ENCODE measurements at regions of chr21 and their contacts with region 1.

Region 1: GRCh38 chr21:32569261-32570230 is 15.8 kb downstream of the TCP10L start:
- DNase-seq: peak; percentile 86
- H3K4me3 ChIP-seq: peak overlapping the region; percentile 66 to 73
- H3K27ac ChIP-seq: peak overlapping the region; percentile 77 to 91
- H3K4me1 ChIP-seq: peaks cover 0 to 6% of the 10 kb centered on the region in 2 experiments; a peak in 3 of 4 replicates
- H3K27me3 ChIP-seq: no peaks in the 10 kb centered on the region
- CTCF ChIP-seq: peak; percentile 88
- EP300 ChIP-seq: no peak; a peak in 1 of 4 replicates
- RAD21 ChIP-seq: peak; percentile 67

Region 2: DNA sequence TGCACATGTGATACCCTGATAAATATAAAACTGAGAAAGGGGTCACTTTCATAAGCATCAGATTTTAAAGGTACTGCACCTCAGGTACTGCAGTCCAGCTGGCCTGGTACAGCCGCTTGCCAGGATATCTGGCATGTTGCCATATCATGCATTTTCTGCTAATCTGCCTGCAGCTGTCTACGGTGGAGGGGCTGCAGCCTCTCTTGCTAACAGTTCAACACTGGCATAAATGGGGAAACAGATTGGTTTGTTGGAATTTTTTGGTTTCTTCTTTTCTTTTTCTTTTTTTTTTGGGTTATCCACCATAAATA is 362.2 kb before region 1 on chr21:
- CTCF ChIA-PET with region 1: no interaction called
- POLR2A ChIA-PET with region 1: no interaction called
- DNase-seq: peak; percentile 76
- H3K4me3 ChIP-seq: no peak overlapping the region
- H3K27ac ChIP-seq: peak overlapping the region in 1 of 2 experiments; percentile 92; a peak in 2 of 4 replicates
- H3K4me1 ChIP-seq: peaks cover 0 to 25% of the 10 kb centered on the region in 2 experiments; a peak in 2 of 4 replicates
- H3K27me3 ChIP-seq: no peaks in the 10 kb centered on the region
- CTCF ChIP-seq: no peak
- EP300 ChIP-seq: peak in 1 of 2 experiments; percentile 71; a peak in 2 of 4 replicates
- RAD21 ChIP-seq: peak; percentile 24; the same call in 1 of the 2 replicates

Region 3: GRCh38 chr21:32403201-32403777 is 166.3 kb before region 1 on chr21:
- CTCF ChIA-PET with region 1: interaction called, 67 read pairs
- POLR2A ChIA-PET with region 1: no interaction called
- DNase-seq: peak; percentile 81
- H3K4me3 ChIP-seq: no peak overlapping the region
- H3K27ac ChIP-seq: no peak overlapping the region
- H3K4me1 ChIP-seq: no peaks in the 10 kb centered on the region; a peak in 1 of 4 replicates
- H3K27me3 ChIP-seq: no peaks in the 10 kb centered on the region
- CTCF ChIP-seq: peak; percentile 79
- EP300 ChIP-seq: no peak
- RAD21 ChIP-seq: peak; percentile 82

Region 4: GRCh38 chr21:32412162-32413014 is 157.2 kb before region 1 on chr21 and contains the start of gene EVA1C:
- CTCF ChIA-PET with region 1: interaction called, 14 read pairs
- POLR2A ChIA-PET with region 1: no interaction called
- DNase-seq: peak; percentile 82
- H3K4me3 ChIP-seq: peak within 1 kb of the TSS; percentile 63 to 72
- H3K27ac ChIP-seq: peak within 1 kb of the TSS in 1 of 2 experiments; percentile 81; a peak in 2 of 4 replicates
- H3K4me1 ChIP-seq: peaks cover 13% of the 10 kb centered on the region in 2 experiments; a peak in 3 of 4 replicates
- H3K27me3 ChIP-seq: no peaks in the 10 kb centered on the region
- CTCF ChIP-seq: no peak; the same call in 1 of the 2 replicates
- EP300 ChIP-seq: no peak
- RAD21 ChIP-seq: no peak
- polyA plus RNA-seq, gene EVA1C: 9.5 and 10.1 TPM in 2 replicates

Region 5: DNA sequence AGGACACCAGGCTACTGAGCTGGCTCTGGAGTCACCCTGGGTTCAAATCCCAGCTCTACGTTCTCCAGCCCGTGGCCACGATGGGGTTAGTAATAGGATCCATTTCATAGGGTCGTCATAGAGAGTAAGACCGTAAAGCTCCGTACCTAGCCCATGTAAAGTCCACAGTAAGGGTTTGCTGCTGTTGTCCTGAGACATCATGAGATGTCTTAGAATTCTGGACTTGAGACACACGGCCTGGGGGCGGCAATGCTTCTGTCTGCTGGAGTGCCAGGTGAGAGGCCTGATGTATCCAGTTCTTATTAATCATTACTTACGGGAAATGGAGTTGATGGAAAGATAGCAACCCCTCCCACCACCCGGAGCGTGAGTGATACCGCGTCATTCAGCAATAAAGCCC is 12.2 kb after region 1 on chr21:
- CTCF ChIA-PET with region 1: interaction called, 14 read pairs
- POLR2A ChIA-PET with region 1: no interaction called
- DNase-seq: no peak
- H3K4me3 ChIP-seq: no peak overlapping the region
- H3K27ac ChIP-seq: no peak overlapping the region
- H3K4me1 ChIP-seq: no peaks in the 10 kb centered on the region
- H3K27me3 ChIP-seq: no peaks in the 10 kb centered on the region
- CTCF ChIP-seq: no peak
- EP300 ChIP-seq: no peak
- RAD21 ChIP-seq: no peak

Region 6: DNA sequence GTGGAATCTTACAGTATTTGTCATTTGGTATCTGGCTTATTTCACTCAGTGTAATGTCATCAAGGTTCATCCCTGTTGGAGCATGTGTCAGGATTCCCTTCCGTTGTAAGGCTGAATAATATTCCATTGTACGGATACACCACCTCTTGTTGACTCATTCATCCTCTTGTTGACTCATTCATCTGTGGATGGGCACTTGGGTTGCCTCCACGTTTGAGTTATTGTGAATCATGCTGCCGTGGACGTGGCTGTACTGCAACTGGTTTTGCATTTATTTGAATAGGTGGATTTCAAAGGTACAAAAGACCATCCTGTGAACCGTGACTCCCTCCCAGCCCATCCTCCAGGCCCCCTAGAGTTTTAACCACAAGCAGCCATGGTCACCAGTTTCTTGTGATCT is 27.7 kb after region 1 on chr21:
- CTCF ChIA-PET with region 1: interaction called, 39 read pairs
- POLR2A ChIA-PET with region 1: no interaction called
- DNase-seq: no peak
- H3K4me3 ChIP-seq: no peak overlapping the region
- H3K27ac ChIP-seq: peak overlapping the region in 1 of 2 experiments; percentile 97; a peak in 2 of 4 replicates
- H3K4me1 ChIP-seq: peaks cover 0 to 3% of the 10 kb centered on the region in 2 experiments; a peak in 1 of 4 replicates
- H3K27me3 ChIP-seq: no peaks in the 10 kb centered on the region
- CTCF ChIP-seq: no peak
- EP300 ChIP-seq: peak in 1 of 2 experiments; percentile 94; a peak in 2 of 4 replicates
- RAD21 ChIP-seq: no peak

Region 7: DNA sequence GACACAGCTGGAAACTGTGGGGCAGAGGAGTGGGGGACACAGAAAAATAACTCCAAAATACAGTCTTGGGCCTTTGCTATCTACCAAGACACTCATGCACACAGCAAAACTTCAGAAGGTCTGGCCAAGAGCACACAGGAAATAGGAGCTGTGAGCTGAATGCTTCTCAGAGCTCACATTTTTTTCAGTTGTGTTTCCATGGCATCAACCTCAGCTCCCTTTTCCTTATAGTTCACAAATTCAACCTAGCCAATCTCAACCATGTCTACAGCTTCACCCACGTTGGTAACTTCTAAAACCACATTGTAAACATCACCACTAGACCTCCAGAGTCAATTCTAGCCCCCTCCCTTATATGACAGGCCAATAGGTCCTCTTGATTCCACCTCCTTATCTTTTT is 177.8 kb after region 1 on chr21:
- CTCF ChIA-PET with region 1: no interaction called
- POLR2A ChIA-PET with region 1: no interaction called
- DNase-seq: no peak
- H3K4me3 ChIP-seq: no peak overlapping the region
- H3K27ac ChIP-seq: no peak overlapping the region
- H3K4me1 ChIP-seq: no peaks in the 10 kb centered on the region
- H3K27me3 ChIP-seq: no peaks in the 10 kb centered on the region
- CTCF ChIP-seq: no peak
- EP300 ChIP-seq: no peak
- RAD21 ChIP-seq: no peak

Region 8: GRCh38 chr21:32894310-32894709 is 324.8 kb after region 1 on chr21:
- CTCF ChIA-PET with region 1: no interaction called
- POLR2A ChIA-PET with region 1: no interaction called
- DNase-seq: no peak
- H3K4me3 ChIP-seq: no peak overlapping the region
- H3K27ac ChIP-seq: no peak overlapping the region
- H3K4me1 ChIP-seq: no peaks in the 10 kb centered on the region
- H3K27me3 ChIP-seq: peaks cover 11% of the 10 kb centered on the region; the same call in 1 of the 2 replicates
- CTCF ChIP-seq: no peak
- EP300 ChIP-seq: no peak
- RAD21 ChIP-seq: no peak